Caco-2 (cell line): ENCODE measurements at regions of chr1 and their contacts with region 1.

Region 1: GRCh38 chr1:22557341-22557950 is 5.8 kb upstream of the EPHA8 start:
- DNase-seq: no peak
- H3K4me3 ChIP-seq: no peak overlapping the region
- H3K4me3 Mint-ChIP-seq: no peak overlapping the region
- H3K27ac Mint-ChIP-seq: no peak overlapping the region
- H3K4me1 ChIP-seq: no peaks in the 10 kb centered on the region
- H3K4me1 Mint-ChIP-seq: no peaks in the 10 kb centered on the region
- H3K27me3 ChIP-seq: peaks cover 3% of the 10 kb centered on the region
- H3K27me3 Mint-ChIP-seq: peaks cover 16% of the 10 kb centered on the region
- CTCF ChIP-seq: no peak

Region 2: GRCh38 chr1:22398656-22399420 is 158.6 kb before region 1 on chr1:
- CTCF ChIA-PET with region 1: no interaction called
- POLR2A ChIA-PET with region 1: no interaction called
- intact Hi-C with region 1: no loop called
- DNase-seq: no peak
- H3K4me3 ChIP-seq: no peak overlapping the region
- H3K4me3 Mint-ChIP-seq: no peak overlapping the region
- H3K27ac Mint-ChIP-seq: no peak overlapping the region
- H3K4me1 ChIP-seq: no peaks in the 10 kb centered on the region
- H3K4me1 Mint-ChIP-seq: no peaks in the 10 kb centered on the region
- H3K27me3 ChIP-seq: no peaks in the 10 kb centered on the region
- H3K27me3 Mint-ChIP-seq: no peaks in the 10 kb centered on the region
- CTCF ChIP-seq: no peak

Region 3: GRCh38 chr1:22503721-22504410 is 53.6 kb before region 1 on chr1:
- CTCF ChIA-PET with region 1: no interaction called
- POLR2A ChIA-PET with region 1: no interaction called
- intact Hi-C with region 1: no loop called
- DNase-seq: peak in 1 of 2 experiments; percentile 27
- H3K4me3 ChIP-seq: no peak overlapping the region
- H3K4me3 Mint-ChIP-seq: no peak overlapping the region
- H3K27ac Mint-ChIP-seq: no peak overlapping the region
- H3K4me1 ChIP-seq: peaks cover 15% of the 10 kb centered on the region
- H3K4me1 Mint-ChIP-seq: no peaks in the 10 kb centered on the region
- H3K27me3 ChIP-seq: no peaks in the 10 kb centered on the region
- H3K27me3 Mint-ChIP-seq: no peaks in the 10 kb centered on the region
- CTCF ChIP-seq: no peak

Region 4: DNA sequence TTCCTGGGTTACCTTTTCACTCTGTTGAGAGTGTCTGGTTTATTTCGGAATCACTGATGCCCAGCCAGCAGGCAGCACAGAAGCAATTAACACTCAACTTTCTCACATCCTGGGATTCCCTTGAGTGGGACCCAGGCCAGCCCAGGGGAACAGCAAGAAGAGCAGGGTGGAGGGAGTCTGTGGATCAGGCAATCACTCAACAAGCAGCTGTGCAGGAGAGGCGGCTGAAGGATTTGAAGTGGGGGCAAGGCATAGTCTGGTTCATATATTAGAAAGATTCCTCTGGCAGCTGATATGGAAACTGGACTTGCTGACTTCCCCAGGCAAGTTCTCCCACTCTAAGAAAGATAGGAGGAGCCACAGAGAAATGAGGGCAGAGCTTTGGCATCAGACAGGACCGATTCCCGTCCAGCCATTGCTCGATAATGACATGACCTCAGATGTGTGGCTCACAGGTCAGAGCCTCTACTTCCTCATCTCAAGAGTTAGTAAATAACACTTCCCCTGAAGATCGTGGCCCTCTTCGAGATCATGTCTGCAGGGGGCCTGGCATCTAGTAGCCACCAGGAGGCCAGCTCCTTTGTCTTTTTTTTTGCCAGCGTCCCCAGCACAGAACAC is 18.2 kb after region 1 on chr1:
- CTCF ChIA-PET with region 1: no interaction called
- POLR2A ChIA-PET with region 1: no interaction called
- intact Hi-C with region 1: loop called (anchors 1 kb)
- DNase-seq: no peak
- H3K4me3 ChIP-seq: no peak overlapping the region
- H3K4me3 Mint-ChIP-seq: no peak overlapping the region
- H3K27ac Mint-ChIP-seq: no peak overlapping the region
- H3K4me1 ChIP-seq: no peaks in the 10 kb centered on the region
- H3K4me1 Mint-ChIP-seq: no peaks in the 10 kb centered on the region
- H3K27me3 ChIP-seq: no peaks in the 10 kb centered on the region; the same call in 1 of the 2 replicates
- H3K27me3 Mint-ChIP-seq: peaks cover 8% of the 10 kb centered on the region
- CTCF ChIP-seq: no peak